K562 (cell line): ENCODE measurements at regions of chr20 and their contacts with region 1.

Region 1: DNA sequence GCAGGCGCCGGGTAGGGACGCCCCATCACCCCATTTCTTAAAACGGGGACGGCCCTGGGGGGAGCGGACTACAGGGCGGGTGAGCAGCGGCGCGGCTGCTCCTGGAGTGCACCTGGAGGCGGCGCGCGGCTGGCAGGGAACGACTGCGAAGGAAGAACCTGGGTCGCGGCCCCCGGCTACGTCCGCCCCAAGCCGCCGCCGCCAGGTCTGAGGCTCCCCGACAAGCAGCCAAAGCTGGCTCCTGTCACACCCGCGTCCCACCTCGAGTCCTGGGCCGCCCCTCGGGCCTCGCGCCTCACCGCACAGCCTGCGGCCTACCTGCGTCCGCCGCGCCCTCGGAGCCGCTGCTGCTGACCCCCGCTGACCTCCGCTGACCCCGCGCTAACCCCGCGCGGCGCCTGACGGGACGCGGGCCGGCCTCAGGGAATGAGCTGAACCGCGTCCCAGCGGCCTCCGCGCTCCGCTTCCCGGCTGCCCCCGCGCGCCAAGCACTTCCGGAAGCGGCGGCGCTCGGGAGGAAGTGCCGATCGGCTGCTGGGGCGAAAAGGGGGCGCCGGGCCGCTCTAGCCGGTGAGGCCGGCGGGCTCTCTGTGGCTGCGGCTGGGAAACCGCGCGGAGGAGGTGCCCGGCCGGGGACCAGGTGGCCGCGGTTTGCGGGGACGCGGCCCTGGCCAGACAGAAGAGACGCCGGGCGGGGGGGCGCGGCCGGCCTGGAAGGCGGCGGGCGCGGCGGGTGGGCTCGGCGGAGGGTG is at the starts of genes ARFRP1 and ZGPAT:
- DNase-seq: peak; percentile 83 to 95 (median 86)
- ATAC-seq: peak; percentile 92
- H3K4me3 ChIP-seq: peak within 1 kb of the TSS; percentile 100
- H3K27ac ChIP-seq: peak within 1 kb of the TSS; percentile 96
- H3K4me1 ChIP-seq: peaks cover 13 to 58% of the 10 kb centered on the region in 2 experiments
- H3K27me3 ChIP-seq: no peaks in the 10 kb centered on the region
- CTCF ChIP-seq: no peak
- EP300 ChIP-seq: no peak
- POLR2A ChIP-seq: peak; percentile 63
- RAD21 ChIP-seq: 0 out of 4 replicates have a peak, but pooled peaks of 1 of the 2 experiments have one; percentile 16
- polyA plus RNA-seq, gene ARFRP1: 2.2 to 6.0 TPM
- polyA plus RNA-seq, gene ZGPAT: 0.14 to 0.21 TPM

Region 2: DNA sequence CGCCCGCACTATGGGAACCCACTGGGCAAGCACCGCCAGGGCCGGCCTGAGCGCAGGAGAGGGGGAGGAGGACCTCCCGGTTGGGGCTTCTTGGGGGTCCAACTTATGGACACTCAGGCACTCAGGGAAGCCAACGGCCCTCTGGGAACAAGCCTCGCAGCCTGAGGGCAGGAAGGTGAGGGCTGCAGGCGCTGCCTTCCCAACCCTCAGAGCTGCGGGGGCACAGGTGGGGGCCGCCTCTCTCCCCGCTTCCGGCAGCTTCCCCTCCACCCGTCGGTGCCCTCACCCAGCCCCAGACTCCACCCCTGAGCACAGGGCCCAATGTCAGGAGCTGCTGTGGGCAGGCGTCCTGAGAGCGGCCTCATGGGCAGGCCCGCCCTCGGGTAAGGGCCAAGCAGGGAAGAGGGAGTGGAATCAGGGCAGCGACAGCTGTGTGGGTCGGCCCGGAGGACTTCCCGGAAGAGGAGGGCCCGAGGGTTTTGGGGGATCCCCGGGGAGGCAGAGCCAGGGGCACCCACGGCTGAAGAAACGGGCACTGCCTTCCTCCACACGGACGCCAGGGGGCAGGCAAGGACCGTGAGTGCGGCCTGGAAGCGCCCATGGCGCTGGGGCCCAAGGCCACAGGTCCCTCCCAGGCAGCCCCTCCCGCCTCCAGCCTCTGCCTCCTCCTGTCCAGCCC is 170.1 kb before region 1 on chr20:
- CTCF ChIA-PET with region 1: interaction called, 3 read pairs
- POLR2A ChIA-PET with region 1: interaction called, 3 read pairs
- in situ Hi-C with region 1: no loop called
- intact Hi-C with region 1: loop called (anchors 10 kb)
- DNase-seq: peak; percentile 90 to 94 (median 92)
- ATAC-seq: peak; percentile 95
- H3K4me3 ChIP-seq: no peak overlapping the region
- H3K27ac ChIP-seq: no peak overlapping the region
- H3K4me1 ChIP-seq: peaks cover 6 to 90% of the 10 kb centered on the region in 2 experiments; a peak in 4 of 5 replicates
- H3K27me3 ChIP-seq: peaks cover 0 to 26% of the 10 kb centered on the region in 2 experiments; a peak in 2 of 5 replicates
- CTCF ChIP-seq: peak; percentile 89 to 95 (median 92)
- EP300 ChIP-seq: no peak
- POLR2A ChIP-seq: no peak
- RAD21 ChIP-seq: peak; percentile 94 to 97

Region 3: DNA sequence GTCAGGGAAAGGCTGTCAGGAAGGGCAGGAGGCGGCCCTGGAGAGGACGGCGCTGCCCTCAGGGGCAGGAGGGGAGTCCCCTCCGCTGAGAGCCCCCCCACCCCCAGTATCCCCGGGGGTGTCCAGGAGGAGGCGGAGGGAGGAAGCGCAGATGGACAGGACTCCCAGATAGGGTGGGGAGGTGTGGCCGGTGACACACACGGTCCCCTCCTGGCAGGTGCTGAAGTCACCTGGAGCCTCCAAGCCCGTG is 55.9 kb before region 1 on chr20:
- CTCF ChIA-PET with region 1: no interaction called
- POLR2A ChIA-PET with region 1: no interaction called
- in situ Hi-C with region 1: no loop called
- intact Hi-C with region 1: no loop called
- DNase-seq: peak; percentile 29 to 63 (median 54)
- ATAC-seq: peak; percentile 4; the same call in 1 of the 3 replicates
- H3K4me3 ChIP-seq: peak overlapping the region; percentile 68
- H3K27ac ChIP-seq: no peak overlapping the region
- H3K4me1 ChIP-seq: peaks cover 25 to 67% of the 10 kb centered on the region in 2 experiments
- H3K27me3 ChIP-seq: no peaks in the 10 kb centered on the region
- CTCF ChIP-seq: no peak
- EP300 ChIP-seq: no peak
- POLR2A ChIP-seq: no peak
- RAD21 ChIP-seq: no peak

Region 4: GRCh38 chr20:63772781-63773518 is 65.2 kb after region 1 on chr20:
- CTCF ChIA-PET with region 1: no interaction called
- POLR2A ChIA-PET with region 1: no interaction called
- in situ Hi-C with region 1: loop called (anchors 5 kb)
- intact Hi-C with region 1: no loop called
- DNase-seq: peak in 1 of 4 experiments; percentile 43
- ATAC-seq: peak; percentile 66
- H3K4me3 ChIP-seq: no peak overlapping the region
- H3K27ac ChIP-seq: no peak overlapping the region; the same call in 2 of the 3 replicates
- H3K4me1 ChIP-seq: peaks cover 7 to 47% of the 10 kb centered on the region in 2 experiments; a peak in 3 of 5 replicates
- H3K27me3 ChIP-seq: peaks cover 0 to 5% of the 10 kb centered on the region in 2 experiments; a peak in 2 of 5 replicates
- CTCF ChIP-seq: no peak
- EP300 ChIP-seq: no peak
- POLR2A ChIP-seq: no peak
- RAD21 ChIP-seq: no peak

Region 5: DNA sequence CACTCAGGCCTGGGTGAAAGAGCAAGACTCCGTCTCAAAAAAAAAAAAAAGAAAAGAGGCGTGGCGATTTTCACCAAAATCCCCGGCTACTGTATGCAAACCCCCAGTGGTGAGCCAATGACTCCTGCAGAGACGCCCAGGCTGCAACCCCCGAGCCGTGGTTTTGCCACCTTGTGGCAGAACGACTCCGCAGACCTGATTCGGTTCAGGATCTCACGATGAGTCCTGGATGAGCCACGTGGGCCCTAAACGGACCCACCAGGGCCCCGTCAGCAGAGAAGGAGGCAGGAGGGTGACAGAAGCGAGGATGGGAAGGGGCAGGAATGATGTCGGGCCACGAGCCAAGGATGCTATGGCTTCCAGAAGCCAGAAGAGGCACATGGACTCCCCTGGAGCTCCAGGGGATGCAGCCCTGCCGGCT is 74.3 kb after region 1 on chr20:
- CTCF ChIA-PET with region 1: no interaction called
- POLR2A ChIA-PET with region 1: no interaction called
- in situ Hi-C with region 1: no loop called
- intact Hi-C with region 1: loop called (anchors 10 kb)
- DNase-seq: no peak
- ATAC-seq: peak; percentile 48
- H3K4me3 ChIP-seq: no peak overlapping the region
- H3K27ac ChIP-seq: no peak overlapping the region
- H3K4me1 ChIP-seq: peaks cover 5 to 25% of the 10 kb centered on the region in 2 experiments; a peak in 4 of 5 replicates
- H3K27me3 ChIP-seq: no peaks in the 10 kb centered on the region
- CTCF ChIP-seq: peak; percentile 10 to 25 (median 16); a peak in 1 of 6 replicates
- EP300 ChIP-seq: no peak
- POLR2A ChIP-seq: no peak
- RAD21 ChIP-seq: no peak

Region 6: GRCh38 chr20:63808964-63809674 is 101.4 kb after region 1 on chr20:
- CTCF ChIA-PET with region 1: no interaction called
- POLR2A ChIA-PET with region 1: no interaction called
- in situ Hi-C with region 1: no loop called
- intact Hi-C with region 1: loop called (anchors 5 kb)
- DNase-seq: peak in 2 of 4 experiments; percentile 45 to 53
- ATAC-seq: peak; percentile 91
- H3K4me3 ChIP-seq: no peak overlapping the region
- H3K27ac ChIP-seq: no peak overlapping the region
- H3K4me1 ChIP-seq: peaks cover 0 to 28% of the 10 kb centered on the region in 2 experiments; a peak in 2 of 5 replicates
- H3K27me3 ChIP-seq: peaks cover 0 to under 1% of the 10 kb centered on the region in 2 experiments; a peak in 1 of 5 replicates
- CTCF ChIP-seq: peak; percentile 62 to 68 (median 66); a peak in 5 of 6 replicates
- EP300 ChIP-seq: no peak
- POLR2A ChIP-seq: no peak
- RAD21 ChIP-seq: peak in 1 of 2 experiments; percentile 46; a peak in 2 of 4 replicates

Region 7: DNA sequence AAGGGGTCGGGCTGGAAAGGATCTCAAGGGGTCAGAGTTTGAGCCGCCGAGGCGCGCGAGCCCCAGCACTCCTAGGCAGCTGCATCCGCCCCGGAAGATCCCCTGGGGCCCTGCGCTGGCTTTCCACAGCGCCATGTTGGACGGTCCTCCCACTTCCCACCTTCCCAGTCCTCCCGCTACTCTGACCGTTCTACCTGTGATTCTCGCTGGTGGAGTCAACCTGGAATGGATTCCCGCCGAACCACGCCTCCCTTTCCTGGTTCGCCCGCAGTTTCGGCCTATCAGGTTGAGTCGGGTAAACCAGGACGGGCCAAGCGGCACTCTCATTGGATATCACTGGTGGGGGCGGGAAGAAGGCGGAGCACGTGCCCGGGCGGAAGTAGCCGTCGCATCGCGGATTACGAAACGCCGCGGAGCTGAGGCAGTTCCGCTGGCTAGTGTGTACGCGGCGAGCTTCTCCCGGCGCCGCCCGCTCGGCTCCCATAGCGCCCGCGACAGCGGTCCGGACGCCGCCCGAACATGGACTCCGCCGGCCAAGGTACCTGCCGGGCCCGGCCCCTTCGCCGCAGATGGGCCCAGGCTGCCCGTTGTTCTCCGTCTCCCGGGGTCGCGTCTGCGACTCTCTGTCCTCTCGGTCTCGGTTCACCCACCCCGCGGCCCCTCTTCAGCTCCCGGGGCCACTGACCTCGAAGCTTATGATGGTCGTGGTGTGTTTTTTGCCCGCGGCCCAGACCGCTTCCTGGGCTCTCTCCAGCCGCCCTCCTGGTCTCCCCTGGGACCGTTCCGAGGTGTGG is 157.3 kb after region 1 on chr20 and contains the start of gene TPD52L2:
- CTCF ChIA-PET with region 1: interaction called, 18 read pairs
- POLR2A ChIA-PET with region 1: interaction called, 23 read pairs
- in situ Hi-C with region 1: loop called (anchors 5 kb)
- intact Hi-C with region 1: loop called (anchors 2 kb)
- DNase-seq: peak; percentile 94 to 99 (median 97)
- ATAC-seq: peak; percentile 91
- H3K4me3 ChIP-seq: peak within 1 kb of the TSS; percentile 95
- H3K27ac ChIP-seq: peak within 1 kb of the TSS; percentile 89
- H3K4me1 ChIP-seq: peaks cover 9 to 63% of the 10 kb centered on the region in 2 experiments; a peak in 4 of 5 replicates
- H3K27me3 ChIP-seq: no peaks in the 10 kb centered on the region
- CTCF ChIP-seq: no peak
- EP300 ChIP-seq: no peak
- POLR2A ChIP-seq: peak; percentile 91
- RAD21 ChIP-seq: no peak
- polyA plus RNA-seq, gene TPD52L2: 1.9 to 9.3 TPM

Region 8: GRCh38 chr20:63955827-63956663 is 248.3 kb after region 1 on chr20 and contains the start of gene UCKL1:
- CTCF ChIA-PET with region 1: no interaction called
- POLR2A ChIA-PET with region 1: no interaction called
- in situ Hi-C with region 1: no loop called
- intact Hi-C with region 1: loop called (anchors 5 kb)
- DNase-seq: peak; percentile 79 to 91 (median 86)
- ATAC-seq: peak; percentile 90
- H3K4me3 ChIP-seq: peak within 1 kb of the TSS; percentile 99
- H3K27ac ChIP-seq: peak within 1 kb of the TSS; percentile 99
- H3K4me1 ChIP-seq: peaks cover 16 to 85% of the 10 kb centered on the region in 2 experiments; a peak in 4 of 5 replicates
- H3K27me3 ChIP-seq: no peaks in the 10 kb centered on the region
- CTCF ChIP-seq: peak in 1 of 3 experiments; percentile 5; a peak in 1 of 6 replicates
- EP300 ChIP-seq: no peak
- POLR2A ChIP-seq: peak; percentile 92
- RAD21 ChIP-seq: no peak
- polyA plus RNA-seq, gene UCKL1: 3.1 to 6.6 TPM